Mammary epithelial cell (primary cell): ENCODE measurements at regions of chr4 and their contacts with region 1.

Region 1: GRCh38 chr4:164288578-164288977 is 465.4 kb upstream of the SMIM31 start:
- DNase-seq: no peak
- H3K4me3 ChIP-seq: no peak overlapping the region
- H3K27ac ChIP-seq: no peak overlapping the region
- H3K4me1 ChIP-seq: no peaks in the 10 kb centered on the region
- H3K27me3 ChIP-seq: peaks cover 5% of the 10 kb centered on the region
- CTCF ChIP-seq: no peak

Region 2: DNA sequence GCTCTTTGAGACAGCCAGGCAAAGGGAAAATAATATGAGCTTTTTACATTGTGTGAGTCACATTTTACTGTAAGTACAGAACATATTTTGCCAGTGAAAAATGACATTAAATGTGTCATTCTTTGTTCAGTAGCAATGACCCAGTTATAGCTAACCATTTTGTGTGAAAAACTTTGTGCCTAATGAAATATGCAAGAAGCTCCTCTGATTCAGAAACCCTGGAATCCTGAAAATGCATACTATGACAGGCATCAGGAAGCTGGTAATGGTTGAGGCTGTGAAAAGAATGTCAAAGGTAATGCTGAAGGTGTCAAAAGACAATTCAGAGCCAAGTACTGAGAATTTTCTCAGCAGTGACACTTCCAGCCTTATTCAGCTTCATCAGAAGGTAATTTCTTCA is 84.1 kb before region 1 on chr4:
- CTCF ChIA-PET with region 1: no interaction called
- dilution Hi-C with region 1: loop called (anchors 5 kb)
- in situ Hi-C with region 1: no loop called
- intact Hi-C with region 1: no loop called
- DNase-seq: peak; percentile 70
- H3K4me3 ChIP-seq: no peak overlapping the region
- H3K27ac ChIP-seq: no peak overlapping the region
- H3K4me1 ChIP-seq: no peaks in the 10 kb centered on the region
- H3K27me3 ChIP-seq: peaks cover 2% of the 10 kb centered on the region
- CTCF ChIP-seq: no peak